Heart right ventricle (tissue), 16 donors: ENCODE measurements at regions of chr10 and their contacts with region 1.

Region 1: DNA sequence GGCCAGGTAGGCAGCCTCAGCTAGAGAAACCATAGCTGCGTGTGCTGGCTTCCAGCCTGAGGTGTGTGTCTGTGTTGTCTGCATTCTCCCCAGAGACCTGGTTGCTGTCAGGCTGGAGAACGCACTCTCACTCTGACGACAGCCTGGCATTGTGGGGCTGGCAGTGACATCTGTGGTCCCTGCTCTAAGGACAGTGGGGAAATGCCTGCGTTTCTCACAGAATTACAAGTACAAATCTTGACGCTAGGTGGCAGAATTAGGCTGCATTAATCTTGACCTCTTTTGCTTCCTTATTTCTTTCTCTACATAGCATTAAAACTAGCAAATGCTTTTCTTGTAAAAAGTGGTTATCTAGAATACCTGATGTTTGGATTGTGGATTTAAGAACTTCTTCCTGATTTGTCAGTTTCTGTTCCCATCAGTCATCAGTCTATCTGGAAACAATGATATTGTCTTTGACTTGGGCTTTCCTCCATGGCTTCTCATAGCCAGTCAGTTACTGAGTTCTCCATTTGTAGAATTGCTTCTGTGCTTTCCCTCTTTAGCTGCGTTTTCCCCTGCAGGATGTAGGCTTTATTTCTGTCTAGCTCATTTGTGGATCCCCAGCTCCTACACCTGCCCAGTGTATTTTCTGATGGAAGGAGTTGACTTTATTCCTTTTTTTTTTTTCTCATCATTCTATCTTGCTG is 86.0 kb downstream of the FANK1 start:
- DNase-seq: peak in 1 of 2 donors; percentile 61
- ATAC-seq: peak in 7 of 8 donors; percentile 60 to 81 (median 68)
- H3K4me3 ChIP-seq: no peak overlapping the region
- H3K27ac ChIP-seq: no peak overlapping the region
- H3K4me1 ChIP-seq: peaks cover 0 to 4% (median 0%) of the 10 kb centered on the region in 9 donors
- H3K27me3 ChIP-seq: peaks cover 0 to 10% (median 0%) of the 10 kb centered on the region in 7 donors
- CTCF ChIP-seq: peak; percentile 31 to 87 (median 69)

Region 2: DNA sequence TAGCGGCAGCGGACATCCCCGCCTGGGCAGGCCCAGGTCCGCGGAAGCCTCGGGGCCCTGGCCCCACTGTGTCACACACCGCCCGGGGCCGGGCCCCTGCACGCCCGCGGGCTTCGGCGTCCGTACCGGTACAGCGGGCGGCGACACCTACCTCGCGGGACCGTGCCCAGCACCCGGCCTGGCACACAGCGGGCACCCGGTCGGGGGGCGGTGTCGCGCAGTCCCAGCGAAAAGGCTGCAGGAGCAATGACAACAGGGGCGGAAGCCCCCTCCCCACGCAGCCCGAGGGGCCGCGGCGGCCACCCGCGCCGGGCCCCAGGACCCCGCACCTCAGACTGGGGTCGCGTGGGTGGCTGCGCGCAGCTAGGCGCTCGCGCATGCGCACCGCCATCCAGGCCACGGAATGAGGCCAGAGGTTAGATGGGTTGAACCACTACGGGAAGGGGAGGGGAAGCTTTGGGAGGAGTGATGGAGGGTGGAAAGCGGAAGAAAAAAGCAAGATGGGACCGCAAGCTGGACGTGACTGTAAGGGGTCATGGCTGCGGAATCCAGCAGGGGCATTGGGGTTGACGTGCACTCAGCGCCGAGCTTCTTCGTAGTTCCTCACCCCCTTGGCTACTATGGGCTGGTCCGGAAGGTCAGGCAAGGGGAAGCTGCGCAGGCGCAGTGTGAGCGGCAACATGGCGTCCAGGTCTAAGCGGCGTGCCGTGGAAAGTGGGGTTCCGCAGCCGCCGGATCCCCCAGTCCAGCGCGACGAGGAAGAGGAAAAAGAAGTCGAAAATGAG is 159.3 kb before region 1 on chr10 and contains the starts of genes BCCIP and UROS:
- intact Hi-C with region 1: no loop called
- DNase-seq: peak; percentile 92
- ATAC-seq: peak; percentile 93 to 98 (median 96)
- H3K4me3 ChIP-seq: peak within 1 kb of the TSS; percentile 76 to 100 (median 93)
- H3K27ac ChIP-seq: peak within 1 kb of the TSS; percentile 80 to 99 (median 91)
- H3K4me1 ChIP-seq: peaks cover 15 to 47% (median 32%) of the 10 kb centered on the region in 9 donors
- H3K27me3 ChIP-seq: no peaks in the 10 kb centered on the region
- CTCF ChIP-seq: peak in 1 of 9 donors; percentile 9
- total RNA-seq, gene BCCIP: 35.6 to 53.1 (median 44.3) TPM
- total RNA-seq, gene UROS: 53.5 to 84.3 (median 70.8) TPM

Region 3: GRCh38 chr10:126110489-126111180 is 128.2 kb after region 1 on chr10:
- intact Hi-C with region 1: no loop called
- DNase-seq: no peak
- ATAC-seq: peak in 3 of 8 donors; percentile 47 to 70 (median 70)
- H3K4me3 ChIP-seq: no peak overlapping the region
- H3K27ac ChIP-seq: peak overlapping the region in 2 of 10 donors; percentile 18 to 65
- H3K4me1 ChIP-seq: peaks cover 0 to 28% (median 0%) of the 10 kb centered on the region in 9 donors
- H3K27me3 ChIP-seq: peaks cover 0 to 4% (median 0%) of the 10 kb centered on the region in 7 donors
- CTCF ChIP-seq: no peak

Region 4: DNA sequence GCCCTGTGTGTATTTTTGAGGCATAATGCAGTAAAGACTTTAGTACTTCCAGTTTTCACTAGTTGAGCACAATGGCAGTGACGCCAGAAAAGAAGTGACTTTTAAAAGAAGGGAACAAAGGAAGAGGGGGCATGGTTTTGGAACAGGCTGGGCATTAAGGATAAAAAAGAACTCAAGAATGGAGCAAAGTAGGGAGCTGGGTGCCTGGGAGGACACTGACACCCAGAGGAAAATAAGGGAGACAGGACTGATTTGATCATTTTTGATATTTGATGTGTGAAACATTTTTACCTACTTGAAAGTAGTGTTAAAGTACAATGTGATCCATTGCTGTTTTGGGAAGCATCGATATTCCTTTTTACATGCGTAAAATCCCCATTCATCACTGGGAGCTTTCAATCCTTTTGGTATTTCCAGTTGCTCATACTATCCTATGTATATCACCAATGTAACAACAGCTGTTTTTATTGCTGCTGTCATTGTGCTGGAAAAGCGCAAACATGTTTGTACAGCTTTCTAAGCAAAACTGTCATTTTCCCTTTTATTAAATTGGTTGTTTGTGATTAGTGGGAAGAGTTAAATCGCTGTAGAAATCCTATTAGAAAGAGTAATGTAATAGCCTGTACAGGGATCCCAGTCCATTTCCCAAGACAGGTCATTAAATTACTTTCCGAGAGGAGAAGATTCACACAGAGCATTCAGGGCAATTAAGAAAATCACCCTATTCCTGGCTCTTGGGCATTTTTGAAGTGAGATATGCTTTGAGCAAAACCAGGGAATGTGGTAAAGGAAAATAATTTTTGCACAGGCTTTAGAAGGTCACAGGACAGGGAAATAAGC is 320.6 kb after region 1 on chr10:
- intact Hi-C with region 1: loop called in 5 of 10 experiments (anchors 2 to 10 kb)
- DNase-seq: no peak
- ATAC-seq: no peak
- H3K4me3 ChIP-seq: no peak overlapping the region
- H3K27ac ChIP-seq: no peak overlapping the region
- H3K4me1 ChIP-seq: no peaks in the 10 kb centered on the region
- H3K27me3 ChIP-seq: no peaks in the 10 kb centered on the region
- CTCF ChIP-seq: peak in 7 of 9 donors; percentile 7 to 41 (median 28)

Region 5: GRCh38 chr10:126504063-126504739 is 521.8 kb after region 1 on chr10:
- intact Hi-C with region 1: loop called (anchors 1 to 5 kb)
- DNase-seq: peak in 1 of 2 donors; percentile 28
- ATAC-seq: peak in 5 of 8 donors; percentile 44 to 61 (median 48)
- H3K4me3 ChIP-seq: no peak overlapping the region
- H3K27ac ChIP-seq: no peak overlapping the region
- H3K4me1 ChIP-seq: no peaks in the 10 kb centered on the region
- H3K27me3 ChIP-seq: peaks cover 0 to 13% (median 4%) of the 10 kb centered on the region in 7 donors
- CTCF ChIP-seq: peak; percentile 38 to 81 (median 68)

Region 6: DNA sequence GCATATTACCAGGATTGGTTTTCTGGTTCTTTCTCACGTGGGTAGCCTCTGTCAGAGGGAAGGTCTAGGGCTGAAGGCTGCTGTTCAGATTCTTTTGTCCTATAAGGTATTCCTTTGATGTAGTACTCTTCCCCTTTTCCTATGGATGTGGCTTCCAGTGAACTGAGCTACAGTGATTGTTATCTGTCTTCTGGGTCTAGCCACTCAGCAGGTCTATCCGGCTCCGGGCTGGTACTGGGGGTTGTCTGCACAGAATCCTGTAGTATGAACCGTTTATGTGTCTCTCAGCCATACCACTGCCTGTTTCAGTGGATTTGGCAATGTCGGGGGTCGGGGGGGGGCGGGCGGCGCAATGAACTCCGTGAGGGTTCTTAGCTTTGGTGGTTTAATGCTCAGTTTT is 772.6 kb after region 1 on chr10:
- intact Hi-C with region 1: loop called in 1 of 10 experiments (anchors 10 kb)
- DNase-seq: no peak
- ATAC-seq: no peak
- H3K4me3 ChIP-seq: no peak overlapping the region
- H3K27ac ChIP-seq: no peak overlapping the region
- H3K4me1 ChIP-seq: no peaks in the 10 kb centered on the region
- H3K27me3 ChIP-seq: peaks cover 0 to 3% (median 0%) of the 10 kb centered on the region in 7 donors
- CTCF ChIP-seq: no peak

Region 7: GRCh38 chr10:127587668-127588365 is 1605.4 kb after region 1 on chr10:
- intact Hi-C with region 1: loop called in 1 of 10 experiments (anchors 10 kb)
- DNase-seq: peak in 1 of 2 donors; percentile 25
- ATAC-seq: peak in 3 of 8 donors; percentile 52 to 65 (median 56)
- H3K4me3 ChIP-seq: no peak overlapping the region
- H3K27ac ChIP-seq: peak overlapping the region in 9 of 10 donors; percentile 18 to 83 (median 72)
- H3K4me1 ChIP-seq: peaks cover 0 to 38% (median 0%) of the 10 kb centered on the region in 9 donors
- H3K27me3 ChIP-seq: peaks cover 0 to 9% (median 4%) of the 10 kb centered on the region in 7 donors
- CTCF ChIP-seq: no peak